ENCODE measurements at regions of chr22 and their contacts with region 1.

Region 1: GRCh38 chr22:37658133-37659065 is at the start of gene PDXP:
- DNase-seq: peak; percentile 98

Region 2: GRCh38 chr22:37545700-37546436 is 112.5 kb before region 1 on chr22:
- CTCF ChIA-PET with region 1: no interaction called
- POLR2A ChIA-PET with region 1: no interaction called
- DNase-seq: no peak

Region 3: DNA sequence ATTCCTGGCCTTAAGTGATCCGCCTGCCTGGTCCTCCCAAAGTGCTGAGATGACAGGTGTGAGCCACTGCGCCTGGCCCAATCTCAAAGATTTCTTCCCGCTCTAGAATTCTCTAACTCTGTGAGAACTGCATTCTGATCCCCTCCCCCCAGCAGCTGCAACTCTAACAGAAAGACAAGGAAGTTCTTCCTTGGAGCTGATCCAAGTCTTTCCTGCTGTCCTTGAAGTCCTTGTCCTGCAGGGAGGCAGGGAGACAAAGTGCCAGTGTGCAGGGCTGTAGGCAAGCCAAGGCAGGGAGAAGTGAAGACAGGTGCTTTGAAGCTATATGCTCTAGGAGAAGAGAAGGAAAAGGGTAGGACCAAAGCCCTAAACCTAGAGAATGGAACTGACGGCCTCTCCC is 59.2 kb before region 1 on chr22:
- CTCF ChIA-PET with region 1: no interaction called
- POLR2A ChIA-PET with region 1: no interaction called
- DNase-seq: no peak

Region 4: GRCh38 chr22:37633625-37634416 is 24.6 kb before region 1 on chr22:
- CTCF ChIA-PET with region 1: interaction called, 6 read pairs
- POLR2A ChIA-PET with region 1: interaction called, 58 read pairs
- DNase-seq: no peak

Region 5: GRCh38 chr22:37643225-37643847 is 15.1 kb before region 1 on chr22:
- CTCF ChIA-PET with region 1: interaction called, 37 read pairs
- POLR2A ChIA-PET with region 1: interaction called, 69 read pairs
- DNase-seq: peak; percentile 93

Region 6: GRCh38 chr22:37676736-37677492 is 18.5 kb after region 1 on chr22:
- CTCF ChIA-PET with region 1: interaction called, 40 read pairs
- POLR2A ChIA-PET with region 1: interaction called, 105 read pairs
- DNase-seq: peak; percentile 77

Region 7: GRCh38 chr22:37686002-37686982 is 27.9 kb after region 1 on chr22 and contains the start of gene NOL12:
- CTCF ChIA-PET with region 1: interaction called, 40 read pairs
- POLR2A ChIA-PET with region 1: interaction called, 44 read pairs
- DNase-seq: peak; percentile 92

Region 8: DNA sequence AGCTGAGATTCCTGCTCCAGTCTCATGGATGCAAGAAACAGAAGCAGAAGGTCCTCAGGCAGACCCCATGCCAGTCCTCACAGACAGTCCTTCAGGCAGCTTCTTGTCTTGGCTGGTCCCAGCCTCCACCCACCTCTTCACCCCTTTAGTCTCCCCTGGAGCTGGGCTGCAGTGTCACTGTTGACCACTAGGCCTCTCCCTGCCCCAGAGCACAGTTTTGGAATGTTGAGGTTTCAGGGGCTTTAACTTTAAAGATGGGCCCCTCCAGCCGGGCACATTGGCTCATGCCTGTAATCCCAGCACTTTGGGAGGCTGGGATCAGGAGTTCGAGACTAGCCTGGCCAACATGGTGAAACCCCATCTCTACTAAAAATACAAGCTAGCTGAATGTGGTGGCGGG is 109.9 kb after region 1 on chr22:
- CTCF ChIA-PET with region 1: no interaction called
- POLR2A ChIA-PET with region 1: no interaction called
- DNase-seq: peak; percentile 58

Measured in HEK293T (cell line).